Gastrocnemius medialis (tissue), 4 donors: ENCODE measurements at regions of chr11 and their contacts with region 1.

Region 1: DNA sequence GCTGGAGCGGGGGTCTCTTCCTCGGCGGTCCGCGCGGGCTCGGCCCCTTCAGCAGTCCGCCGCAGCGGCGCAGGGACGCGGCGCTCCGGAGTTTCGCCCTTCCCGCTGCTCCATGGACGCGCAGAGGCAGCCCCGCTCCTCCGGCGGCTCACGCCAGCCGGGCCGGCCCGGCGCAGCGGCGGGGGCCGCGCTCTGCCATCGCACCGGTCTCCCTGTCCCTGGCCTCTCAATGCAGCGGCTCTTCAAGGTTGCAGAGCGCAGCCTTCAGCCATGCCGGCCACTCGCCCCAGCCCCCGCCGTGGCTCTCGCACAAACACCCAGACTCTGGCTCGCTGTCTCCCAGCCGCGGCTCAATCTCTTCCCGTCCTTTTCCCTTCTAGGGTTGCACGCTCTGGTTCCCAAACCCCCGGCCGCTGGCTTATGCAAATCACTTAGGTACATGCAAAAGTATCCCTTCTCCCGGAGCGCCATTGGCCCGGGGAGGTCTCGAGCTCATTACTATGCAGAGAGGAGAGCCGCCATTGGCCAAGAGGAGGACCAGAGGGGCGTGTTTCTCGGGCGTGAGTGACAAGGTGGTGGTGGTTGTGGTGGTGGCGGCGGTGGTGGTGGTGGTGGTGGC is at the start of gene LGR4:
- DNase-seq: peak; percentile 93 to 94
- ATAC-seq: peak; percentile 92 to 95
- H3K4me3 ChIP-seq: peak within 1 kb of the TSS; percentile 62 to 78 (median 66)
- H3K27ac ChIP-seq: peak within 1 kb of the TSS; percentile 74 to 87 (median 82)
- H3K4me1 ChIP-seq: peaks cover 19 to 30% of the 10 kb centered on the region in 2 donors
- H3K27me3 ChIP-seq: no peaks in the 10 kb centered on the region
- CTCF ChIP-seq: no peak
- POLR2A ChIP-seq: peak; percentile 72 to 80
- total RNA-seq, gene LGR4: 5.5 to 37.6 (median 11.8) TPM

Region 2: DNA sequence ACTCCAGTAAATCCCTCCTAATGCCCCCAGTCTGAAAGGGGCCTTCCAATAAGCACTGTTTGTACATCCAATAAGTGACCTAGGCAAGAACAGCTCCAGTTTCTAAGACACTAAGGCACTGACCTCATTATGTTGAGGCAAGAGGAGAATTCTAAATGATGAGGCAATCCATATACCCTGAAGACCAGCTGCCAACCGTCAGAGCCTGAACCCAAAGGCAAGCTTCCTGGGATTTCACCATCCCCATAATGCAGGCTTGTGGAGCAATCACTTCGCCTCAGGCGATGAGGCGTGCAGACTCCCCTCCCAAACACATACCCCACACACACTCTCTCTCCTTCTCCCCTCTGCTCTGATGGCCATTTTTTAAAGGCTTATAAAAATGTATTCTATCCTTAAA is 49.4 kb before region 1 on chr11:
- in situ Hi-C with region 1: no loop called
- intact Hi-C with region 1: loop called (anchors 2 kb)
- DNase-seq: peak; percentile 6 to 36
- ATAC-seq: peak; percentile 80 to 93
- H3K4me3 ChIP-seq: no peak overlapping the region
- H3K27ac ChIP-seq: peak overlapping the region in 2 of 4 donors; percentile 35 to 52
- H3K4me1 ChIP-seq: peaks cover 42 to 56% of the 10 kb centered on the region in 2 donors
- H3K27me3 ChIP-seq: no peaks in the 10 kb centered on the region
- CTCF ChIP-seq: no peak
- POLR2A ChIP-seq: no peak

Region 3: DNA sequence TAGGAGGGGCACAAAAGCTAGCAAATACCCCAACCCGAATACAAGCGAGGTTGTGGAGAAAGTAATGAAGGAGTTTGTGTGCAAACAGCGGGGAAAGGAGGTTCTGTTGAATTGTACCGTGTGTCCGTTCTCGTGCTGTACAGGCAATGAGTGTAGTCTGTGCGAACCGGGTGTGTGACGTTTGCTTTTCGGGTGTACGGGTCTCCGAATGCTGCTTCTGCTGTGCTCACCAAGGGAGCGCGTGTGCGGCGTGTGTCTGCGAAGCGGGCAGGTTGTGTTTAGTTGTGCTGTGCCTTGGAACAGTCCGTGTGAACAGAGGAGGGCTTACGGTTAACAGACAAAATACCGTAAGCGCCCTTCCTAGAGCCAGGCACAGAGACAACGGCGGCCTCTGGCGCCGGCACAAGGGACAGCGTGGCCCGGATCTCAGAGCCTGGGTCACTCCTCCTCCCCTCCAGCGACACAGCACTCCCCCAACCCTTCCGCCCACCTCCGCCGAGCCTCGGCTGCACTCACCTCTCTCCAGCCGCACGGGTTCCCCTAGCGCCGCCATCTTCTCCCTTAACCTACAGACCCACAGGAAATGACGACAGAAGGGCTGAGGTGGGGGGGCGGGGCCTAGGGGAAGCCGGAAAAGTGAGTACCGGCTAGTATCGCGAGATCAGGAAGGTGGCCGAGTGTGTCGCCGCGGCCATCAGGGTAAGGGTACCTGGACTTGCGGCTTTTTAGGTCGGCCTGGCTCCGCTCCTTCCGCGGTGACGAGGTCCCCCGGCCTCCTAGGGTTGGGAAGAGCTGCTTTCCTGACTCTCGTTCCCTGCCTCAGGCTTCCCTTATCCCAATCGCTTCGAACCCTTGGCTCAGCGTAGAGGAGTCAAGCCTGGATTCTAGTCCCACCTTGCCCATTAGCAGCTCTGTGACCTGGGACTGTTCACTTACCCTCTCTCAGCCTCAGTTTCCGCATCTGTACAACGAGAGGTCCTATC is 34.0 kb after region 1 on chr11 and contains the start of gene LIN7C:
- in situ Hi-C with region 1: no loop called
- intact Hi-C with region 1: loop called (anchors 5 kb)
- DNase-seq: peak; percentile 95 to 96
- ATAC-seq: peak; percentile 99
- H3K4me3 ChIP-seq: peak within 1 kb of the TSS; percentile 84 to 99 (median 94)
- H3K27ac ChIP-seq: peak within 1 kb of the TSS; percentile 93 to 97 (median 94)
- H3K4me1 ChIP-seq: peaks cover 32% of the 10 kb centered on the region in 2 donors
- H3K27me3 ChIP-seq: no peaks in the 10 kb centered on the region
- CTCF ChIP-seq: no peak
- POLR2A ChIP-seq: peak; percentile 87 to 88
- total RNA-seq, gene LIN7C: 10.6 to 22.8 (median 13.8) TPM